ENCODE measurements at regions of chr15 and their contacts with region 1.

Region 1: DNA sequence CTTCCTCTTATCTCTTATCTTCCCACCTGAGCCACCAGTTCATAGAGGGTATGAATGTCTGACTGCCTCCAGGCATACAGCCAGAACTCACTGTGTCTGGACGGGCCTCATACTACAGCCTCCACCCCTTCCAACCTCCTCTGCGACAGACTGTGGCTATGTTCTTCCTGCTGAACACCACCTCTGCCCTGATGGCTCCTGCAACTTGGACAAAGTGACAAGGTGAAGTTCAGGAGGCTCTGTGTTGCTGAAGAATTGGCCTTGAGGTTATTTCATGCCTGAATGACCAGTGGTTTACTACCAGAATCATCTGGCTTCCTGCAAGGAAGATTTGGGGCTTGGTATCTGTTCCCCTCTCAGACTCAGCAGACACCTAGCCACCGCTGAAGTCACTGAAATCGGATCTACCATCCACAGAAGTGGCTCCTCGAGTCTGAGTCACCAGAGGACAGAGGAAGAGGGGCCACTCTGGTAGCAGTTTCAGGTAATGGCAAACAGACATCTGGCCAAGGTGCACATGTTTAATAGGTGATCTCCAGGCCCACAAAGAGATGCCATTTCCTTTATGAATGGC is 14.2 kb upstream of the ULK3 start:
- DNase-seq: peak; percentile 52
- H3K4me3 ChIP-seq: no peak overlapping the region
- H3K27ac ChIP-seq: peak overlapping the region; percentile 51
- H3K4me1 ChIP-seq: peaks cover 43% of the 10 kb centered on the region
- CTCF ChIP-seq: no peak

Region 2: DNA sequence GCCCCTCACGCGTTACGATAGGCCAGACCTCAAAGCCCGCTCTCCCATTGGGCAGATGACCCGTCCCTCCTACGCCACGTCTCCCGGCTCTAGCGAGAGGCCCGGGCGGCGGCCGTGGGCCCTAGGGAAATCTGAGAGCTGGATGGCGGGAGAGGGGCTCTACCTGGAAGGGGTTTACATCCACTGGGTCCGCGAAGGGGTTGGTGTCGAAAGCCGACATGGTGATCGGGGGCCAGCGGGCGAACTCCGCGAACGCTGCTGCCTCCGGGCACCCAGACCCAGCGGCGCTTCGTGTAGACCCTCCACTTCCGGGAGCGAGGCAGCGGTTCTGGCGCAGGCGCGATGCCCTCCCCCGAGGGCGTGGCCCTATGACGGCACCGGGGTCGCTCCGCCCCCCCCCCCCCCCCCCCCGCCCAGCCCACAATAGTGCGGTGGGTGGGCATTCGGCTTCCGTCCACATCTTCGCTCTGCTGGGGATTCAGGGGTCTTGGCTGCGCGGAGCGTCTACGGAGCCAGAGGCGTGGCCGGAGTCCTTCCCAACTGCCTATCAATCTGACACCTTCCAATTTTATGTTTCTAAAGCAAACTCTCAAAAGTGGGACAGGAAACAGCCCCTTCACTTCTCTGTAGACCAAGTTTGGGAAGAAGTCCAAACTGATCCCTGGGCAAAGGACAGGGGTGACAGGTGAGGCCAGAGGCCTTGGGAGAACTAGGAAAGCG is 16.0 kb after region 1 on chr15 and contains the start of gene SCAMP2:
- CTCF ChIA-PET with region 1: interaction called, 3 read pairs
- POLR2A ChIA-PET with region 1: interaction called, 21 read pairs
- intact Hi-C with region 1: loop called (anchors 2 kb)
- DNase-seq: peak; percentile 96
- H3K4me3 ChIP-seq: peak within 1 kb of the TSS; percentile 74
- H3K27ac ChIP-seq: peak within 1 kb of the TSS; percentile 49
- H3K4me1 ChIP-seq: peaks cover 38% of the 10 kb centered on the region
- CTCF ChIP-seq: no peak
- total RNA-seq, gene SCAMP2: 21.3 and 24.6 TPM in 2 replicates